Dendritic cell treated with granulocyte-macrophage colony-stimulating factor and Interleukin-4, amounts not matched to agents 40 ng/mL and 50 ng/mL, for 4 days (primary cell): ENCODE measurements at regions of chr2 and their contacts with region 1.

Region 1: DNA sequence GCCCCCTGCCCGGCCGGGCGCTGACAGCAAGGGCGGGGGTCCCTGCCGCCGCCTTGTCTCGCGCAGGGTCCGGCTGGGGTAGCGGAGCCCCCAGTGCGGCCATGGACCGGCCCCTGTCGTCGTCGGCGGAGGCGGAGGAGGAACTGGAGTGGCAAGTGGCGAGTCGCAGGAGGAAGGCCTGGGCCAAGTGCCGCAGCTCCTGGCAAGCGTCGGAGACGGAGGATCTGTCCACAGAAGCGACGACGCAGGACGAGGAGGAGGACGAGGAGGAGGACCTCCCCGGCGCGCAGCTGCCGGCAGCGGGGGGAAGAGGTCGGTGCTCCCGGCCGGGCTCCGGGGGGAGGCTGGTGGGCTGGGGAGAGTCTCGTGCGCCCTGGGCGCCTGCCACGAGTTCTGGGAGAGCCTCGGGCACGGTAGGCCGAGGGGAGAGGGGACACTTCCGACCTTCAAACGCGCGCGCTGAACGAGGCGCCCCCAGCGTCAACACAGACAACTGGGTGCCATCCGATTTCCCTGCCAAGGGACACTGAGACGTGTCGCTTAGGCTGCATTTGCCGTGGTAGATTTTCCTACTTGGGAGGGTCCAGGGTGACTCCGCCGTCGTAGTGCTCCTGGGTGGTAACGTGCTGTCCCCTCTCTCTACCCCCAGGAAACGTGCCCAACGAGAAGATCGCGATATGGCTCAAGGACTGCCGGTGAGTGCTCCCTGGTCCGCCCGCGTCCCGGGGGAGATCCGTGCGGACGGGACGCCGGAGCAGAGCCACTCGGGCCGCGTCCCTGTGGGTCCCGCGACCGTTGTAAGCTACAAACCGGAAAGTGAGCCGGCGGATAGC is 652 bp downstream of the ITPRID2 start:
- H3K4me3 Mint-ChIP-seq: peak overlapping the region; percentile 99
- H3K27ac Mint-ChIP-seq: peak overlapping the region; percentile 99
- H3K4me1 Mint-ChIP-seq: peaks cover 25% of the 10 kb centered on the region
- H3K27me3 Mint-ChIP-seq: no peaks in the 10 kb centered on the region

Region 2: DNA sequence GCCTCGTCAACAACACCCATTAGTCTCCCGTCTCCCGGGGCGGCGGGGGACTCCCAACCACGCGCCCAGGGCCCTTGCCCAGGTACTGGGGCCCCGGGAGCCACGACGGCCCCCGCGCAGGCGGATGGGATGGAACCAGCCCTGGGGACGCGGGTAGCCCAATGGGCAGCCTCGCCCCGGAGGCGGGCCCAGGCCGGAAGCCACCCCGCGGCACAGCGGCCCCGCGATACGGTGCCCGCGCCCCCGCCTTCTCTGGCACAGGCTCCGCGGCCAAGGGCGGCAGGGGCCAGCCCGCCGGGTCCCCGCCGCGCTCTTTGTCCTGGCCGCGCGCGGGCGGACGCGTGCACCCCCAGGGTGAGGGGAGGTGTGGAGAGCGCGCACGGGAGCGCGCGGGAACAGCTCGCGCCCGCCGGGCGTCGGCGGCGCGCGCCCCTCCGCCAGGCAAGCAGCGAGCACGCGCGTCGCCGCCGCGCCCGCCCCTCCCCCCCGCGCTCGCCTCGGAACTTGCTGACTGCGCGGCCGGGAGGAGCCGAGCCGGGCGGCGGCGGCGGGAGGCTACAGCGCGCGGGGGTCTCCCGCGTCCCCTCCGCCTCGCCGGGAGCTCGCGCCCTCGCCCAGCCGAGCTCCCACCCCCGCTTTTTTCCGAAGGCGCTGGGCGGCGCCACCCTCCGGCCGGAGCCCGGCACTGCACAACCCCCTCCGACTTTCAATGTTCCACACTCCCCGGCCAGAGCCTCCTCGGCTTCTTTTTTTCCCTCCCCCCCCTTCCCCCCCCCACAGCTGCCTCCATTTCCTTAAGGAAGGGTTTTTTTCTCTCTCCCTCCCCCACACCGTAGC is 911.9 kb before region 1 on chr2 and contains the start of gene UBE2E3:
- intact Hi-C with region 1: loop called (anchors 10 kb)
- H3K4me3 Mint-ChIP-seq: peak within 1 kb of the TSS; percentile 96
- H3K27ac Mint-ChIP-seq: peak within 1 kb of the TSS; percentile 95
- H3K4me1 Mint-ChIP-seq: peaks cover 28% of the 10 kb centered on the region
- H3K27me3 Mint-ChIP-seq: peaks cover 6% of the 10 kb centered on the region

Region 3: DNA sequence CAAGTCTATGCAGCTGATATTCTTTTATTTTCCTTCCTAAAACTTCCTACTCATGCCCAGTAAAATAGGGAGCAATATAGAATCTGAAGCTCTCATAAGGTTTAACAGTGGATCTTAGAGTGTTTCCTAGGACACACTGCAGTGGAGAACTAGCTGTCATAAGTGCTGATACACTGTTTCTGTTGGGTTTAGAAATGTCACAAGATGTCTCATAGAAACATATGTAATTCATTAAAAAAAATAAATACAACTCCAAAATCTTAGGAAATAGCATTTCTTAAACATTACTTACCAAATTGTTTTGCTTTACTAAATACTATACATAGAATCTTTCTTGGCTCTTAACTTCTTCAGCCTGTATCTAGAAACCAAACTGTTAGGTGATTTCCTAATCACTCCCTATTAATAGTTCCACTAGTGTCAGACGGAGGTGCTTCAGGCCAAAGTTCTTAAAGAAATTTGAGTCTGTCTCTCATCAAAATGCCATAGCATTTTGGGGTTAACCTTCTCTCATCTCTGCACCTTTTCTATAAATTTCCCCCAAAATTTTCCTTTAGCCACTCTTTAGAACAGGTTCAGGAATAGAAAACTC is 329.0 kb before region 1 on chr2:
- intact Hi-C with region 1: no loop called
- H3K4me3 Mint-ChIP-seq: no peak overlapping the region
- H3K27ac Mint-ChIP-seq: no peak overlapping the region
- H3K4me1 Mint-ChIP-seq: no peaks in the 10 kb centered on the region
- H3K27me3 Mint-ChIP-seq: no peaks in the 10 kb centered on the region

Region 4: GRCh38 chr2:181848261-181848886 is 43.8 kb before region 1 on chr2:
- intact Hi-C with region 1: loop called (anchors 2 kb)
- H3K4me3 Mint-ChIP-seq: no peak overlapping the region
- H3K27ac Mint-ChIP-seq: no peak overlapping the region
- H3K4me1 Mint-ChIP-seq: peaks cover 8% of the 10 kb centered on the region
- H3K27me3 Mint-ChIP-seq: no peaks in the 10 kb centered on the region

Region 5: GRCh38 chr2:181904022-181904632 is 11.9 kb after region 1 on chr2:
- intact Hi-C with region 1: no loop called
- H3K4me3 Mint-ChIP-seq: no peak overlapping the region
- H3K27ac Mint-ChIP-seq: no peak overlapping the region
- H3K4me1 Mint-ChIP-seq: peaks cover 31% of the 10 kb centered on the region
- H3K27me3 Mint-ChIP-seq: no peaks in the 10 kb centered on the region